Right ventricle myocardium superior (tissue), 1 donor: ENCODE measurements at regions of chr6 and their contacts with region 1.

Region 1: GRCh38 chr6:17086469-17086868 is 15.4 kb upstream of the STMND1 start:
- DNase-seq: no peak
- ATAC-seq: peak; percentile 81

Region 2: DNA sequence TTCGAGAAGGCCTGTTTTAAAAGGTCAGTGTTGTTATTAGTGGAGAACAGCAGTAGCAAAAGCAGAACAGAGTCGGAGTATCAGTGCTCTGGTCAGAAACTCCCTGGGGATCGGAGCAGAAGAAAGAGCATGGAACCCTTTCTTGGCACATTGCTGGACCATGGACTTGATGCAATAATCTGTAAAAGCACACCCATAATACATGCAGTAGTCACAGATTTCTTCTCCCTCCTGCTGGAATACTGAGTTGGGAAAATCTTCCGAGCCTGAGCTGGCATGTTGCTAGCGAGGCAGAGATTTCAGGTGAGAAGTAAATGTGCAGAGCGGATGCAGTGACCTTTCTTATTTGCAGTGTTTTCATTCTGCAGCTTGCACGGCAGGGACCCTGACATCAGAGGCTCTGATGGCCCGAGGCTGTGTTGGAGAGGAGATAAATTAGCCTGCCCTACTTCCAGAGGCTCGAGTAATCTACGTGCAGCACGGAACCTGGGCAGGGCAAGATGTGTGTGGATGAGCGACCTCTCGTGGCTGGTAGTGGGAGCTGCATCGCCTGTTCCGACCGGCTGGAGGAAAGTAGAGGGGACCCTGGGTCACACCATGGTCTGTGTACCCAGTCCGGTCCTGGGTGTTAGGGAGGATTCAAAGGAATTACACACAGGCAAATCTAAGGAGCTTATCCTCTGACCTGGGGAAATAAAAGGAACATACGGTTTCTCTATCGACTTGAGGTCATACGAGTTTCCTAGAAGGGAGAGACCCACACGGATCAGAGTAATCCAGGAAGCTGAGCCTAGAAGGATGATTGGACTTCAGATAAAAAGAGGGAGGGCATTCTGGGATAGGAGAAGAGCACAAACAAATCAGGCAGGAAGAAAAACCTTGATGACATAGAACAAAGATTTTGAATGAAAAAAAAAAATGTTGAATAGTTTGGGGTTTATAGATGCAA is 121.6 kb before region 1 on chr6:
- intact Hi-C with region 1: loop called (anchors 5 kb)
- DNase-seq: peak; percentile 74
- ATAC-seq: peak; percentile 96

Region 3: DNA sequence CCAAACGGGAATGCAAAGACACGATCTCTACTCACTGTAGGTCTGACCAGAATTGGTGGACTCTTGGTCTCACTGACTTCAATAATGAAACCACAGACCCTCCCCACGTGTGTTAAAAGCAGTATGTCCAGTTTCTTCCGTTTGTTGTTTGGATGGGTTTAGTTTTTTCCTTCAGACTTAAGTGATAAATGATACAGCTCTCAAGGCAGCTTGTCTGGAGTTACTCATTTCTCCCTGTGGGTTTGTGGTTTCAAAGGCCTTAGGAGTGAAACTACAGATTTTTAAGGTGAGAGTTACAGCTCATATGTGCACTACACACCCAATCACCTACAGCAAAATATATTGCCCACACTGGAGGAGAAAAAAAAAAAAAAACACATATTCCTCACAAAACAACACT is 71.3 kb before region 1 on chr6:
- intact Hi-C with region 1: loop called (anchors 10 kb)
- DNase-seq: no peak
- ATAC-seq: no peak

Region 4: DNA sequence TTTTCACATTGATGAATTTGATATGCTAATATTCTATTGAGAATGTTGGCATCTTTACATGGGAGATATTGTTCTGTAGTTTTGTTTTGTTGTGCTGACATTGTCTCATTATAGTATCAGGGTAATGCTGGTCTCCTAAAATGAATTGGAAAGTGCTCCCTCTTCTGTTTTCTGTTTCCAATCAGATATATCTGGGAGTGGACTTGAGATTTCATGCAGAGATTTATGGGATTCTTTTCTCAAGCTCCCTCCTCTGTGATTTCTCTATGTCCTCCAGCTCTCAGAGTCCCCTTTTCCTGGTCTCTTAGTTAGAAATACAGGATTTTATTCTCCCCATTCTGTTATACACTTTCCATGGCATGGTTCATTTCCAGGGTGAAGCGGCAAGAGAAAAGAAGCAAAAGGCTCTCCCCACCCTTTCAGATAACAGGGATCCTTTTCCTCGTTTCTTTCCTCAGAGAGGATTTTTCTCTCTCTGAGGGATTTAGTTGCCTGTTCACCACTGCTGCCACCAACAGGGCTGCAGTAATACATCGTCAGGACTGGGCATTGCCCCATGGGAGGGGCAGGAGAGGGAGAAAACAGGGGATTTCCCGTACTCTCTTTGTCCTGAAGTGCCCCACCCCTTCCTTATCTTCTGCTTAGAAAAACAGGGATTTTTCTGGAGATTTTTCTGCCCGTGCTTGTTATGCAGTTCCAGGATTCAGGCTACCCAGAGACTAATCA is 43.9 kb before region 1 on chr6:
- intact Hi-C with region 1: no loop called
- DNase-seq: no peak
- ATAC-seq: peak; percentile 71

Region 5: DNA sequence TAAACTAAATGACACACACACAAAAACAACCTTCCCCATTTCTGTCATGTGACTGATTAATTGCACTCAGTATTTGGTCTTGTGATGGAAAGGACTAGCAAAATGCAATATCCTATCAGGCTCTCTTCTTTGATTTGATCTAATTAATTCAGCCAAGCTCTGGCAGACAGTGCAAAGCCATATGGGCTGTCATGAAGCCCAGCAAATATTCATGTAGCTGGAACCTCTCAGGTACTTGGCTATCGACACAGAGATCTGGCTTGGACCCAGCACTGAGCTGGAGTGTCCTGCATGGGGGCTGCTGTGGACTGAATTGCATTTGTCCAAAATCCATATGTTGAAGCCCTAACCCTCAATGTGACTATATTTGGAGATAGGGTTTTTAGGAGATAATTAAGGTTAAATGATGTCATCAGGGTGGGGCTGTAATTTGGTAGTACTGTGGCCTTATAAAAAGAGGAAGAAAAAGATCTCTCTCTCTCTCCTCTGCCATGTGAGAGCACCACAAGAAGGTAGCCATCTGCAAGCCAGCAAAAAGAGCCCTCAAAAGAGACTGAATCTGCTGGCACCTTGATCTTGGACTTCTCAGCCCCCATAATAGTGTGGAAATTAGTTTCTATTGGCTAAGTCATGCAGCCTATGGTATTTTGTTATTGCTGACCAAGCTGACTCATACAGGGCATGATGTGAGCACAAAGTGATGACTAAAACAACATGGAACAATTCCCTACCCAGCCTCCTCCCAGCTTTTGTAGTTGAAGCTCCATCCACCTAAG is 92.5 kb after region 1 on chr6:
- intact Hi-C with region 1: no loop called
- DNase-seq: no peak
- ATAC-seq: no peak